ENCODE measurements at regions of chr7 and their contacts with region 1.

Region 1: DNA sequence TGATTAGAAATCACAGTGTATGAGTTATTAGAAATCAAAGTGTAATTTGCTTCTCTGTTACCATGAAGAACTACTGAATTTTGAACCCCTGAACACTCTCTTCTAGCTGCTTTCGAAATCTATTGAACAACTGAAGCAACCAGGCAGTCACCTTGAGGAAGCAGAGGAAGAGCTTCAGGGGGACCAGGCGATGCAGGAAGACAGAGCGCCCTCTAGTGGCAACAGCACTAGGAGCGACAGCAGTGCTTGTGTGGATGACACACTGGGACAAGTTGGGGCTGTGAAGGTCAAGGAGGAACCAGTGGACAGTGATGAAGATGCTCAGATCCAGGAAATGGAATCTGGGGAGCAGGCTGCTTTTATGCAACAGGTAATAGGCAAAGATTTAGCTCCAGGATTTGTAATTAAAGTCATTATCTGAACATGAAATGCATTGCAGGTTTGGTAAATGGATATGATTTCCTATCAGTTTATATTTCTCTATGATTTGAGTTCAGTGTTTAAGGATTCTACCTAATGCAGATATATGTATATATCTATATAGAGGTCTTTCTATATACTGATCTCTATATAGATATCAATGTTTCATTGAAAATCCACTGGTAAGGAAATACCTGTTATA is 170.7 kb downstream of the HDAC9 start:
- DNase-seq: peak; percentile 94

Region 2: DNA sequence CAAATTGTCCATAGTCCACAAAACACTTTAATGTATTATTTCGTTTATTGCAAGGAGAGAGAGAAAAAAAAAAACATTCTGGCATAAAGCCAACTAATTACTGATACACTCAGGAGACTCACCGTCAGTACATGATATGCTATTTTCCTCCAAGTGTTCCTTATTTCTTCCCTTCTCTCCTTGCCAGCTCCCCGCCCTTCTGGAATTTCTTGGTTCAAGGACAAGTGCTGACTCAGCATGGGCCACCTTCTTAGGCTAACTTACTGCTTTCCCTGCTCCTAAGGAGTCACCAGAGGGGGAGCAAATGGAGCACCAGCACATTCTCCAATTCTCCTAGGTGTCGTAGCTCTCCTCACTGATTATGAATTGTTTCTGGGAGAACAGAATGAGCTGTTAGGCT is 304.5 kb before region 1 on chr7:
- in situ Hi-C with region 1: loop called (anchors 10 kb)
- DNase-seq: peak; percentile 26

Region 3: GRCh38 chr7:19248681-19249080 is 582.5 kb after region 1 on chr7:
- in situ Hi-C with region 1: no loop called
- DNase-seq: no peak

Measured in SK-MEL-5 (cell line).